ENCODE measurements at regions of chr6 and their contacts with region 1.

Region 1: DNA sequence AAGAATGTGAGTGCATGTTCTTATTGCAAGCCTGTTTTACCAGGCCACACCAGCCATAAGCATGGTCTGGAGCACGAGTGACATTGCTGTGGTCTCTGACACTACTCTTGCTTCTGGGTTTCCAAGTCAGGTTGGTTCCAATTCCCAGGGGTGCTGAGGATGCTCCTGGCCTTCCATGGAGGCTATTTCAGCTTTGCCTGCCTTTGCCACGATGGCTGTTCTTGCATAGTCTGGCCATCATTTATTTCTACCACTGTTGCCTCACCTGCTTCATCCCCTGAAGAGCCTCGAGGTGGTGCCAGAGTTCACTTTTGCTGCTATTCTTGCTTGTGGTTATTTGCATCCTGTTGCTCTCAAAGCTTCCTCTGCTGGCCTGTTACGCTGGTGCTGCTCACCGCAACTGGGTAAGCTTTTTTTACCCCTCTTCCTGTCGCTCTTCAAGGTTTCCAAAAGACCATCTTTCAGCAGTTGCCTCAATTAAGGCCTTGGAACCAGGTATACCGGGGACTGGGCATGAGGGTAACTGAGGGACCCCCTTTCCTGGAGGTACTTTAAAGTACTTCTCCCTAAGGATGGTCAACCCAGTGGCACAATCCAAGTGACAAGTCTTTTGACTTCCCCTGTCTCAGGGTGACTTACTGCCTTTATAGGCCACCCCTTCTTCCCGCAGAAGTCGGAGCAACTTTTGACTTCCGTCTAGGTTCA is 64.5 kb downstream of the AKAP7 start:
- DNase-seq: peak; percentile 37 to 92 (median 88)
- ATAC-seq: peak; percentile 99
- H3K4me3 ChIP-seq: peak overlapping the region; percentile 44
- H3K4me3 Mint-ChIP-seq: peak overlapping the region; percentile 69 to 87 (median 82)
- H3K27ac ChIP-seq: peak overlapping the region; percentile 79
- H3K27ac Mint-ChIP-seq: peak overlapping the region; percentile 91 to 99 (median 97)
- H3K4me1 ChIP-seq: peaks cover 45 to 57% of the 10 kb centered on the region in 2 donors
- H3K4me1 Mint-ChIP-seq: peaks cover 37 to 71% (median 61%) of the 10 kb centered on the region in 7 donors
- H3K27me3 ChIP-seq: no peaks in the 10 kb centered on the region
- H3K27me3 Mint-ChIP-seq: no peaks in the 10 kb centered on the region

Region 2: DNA sequence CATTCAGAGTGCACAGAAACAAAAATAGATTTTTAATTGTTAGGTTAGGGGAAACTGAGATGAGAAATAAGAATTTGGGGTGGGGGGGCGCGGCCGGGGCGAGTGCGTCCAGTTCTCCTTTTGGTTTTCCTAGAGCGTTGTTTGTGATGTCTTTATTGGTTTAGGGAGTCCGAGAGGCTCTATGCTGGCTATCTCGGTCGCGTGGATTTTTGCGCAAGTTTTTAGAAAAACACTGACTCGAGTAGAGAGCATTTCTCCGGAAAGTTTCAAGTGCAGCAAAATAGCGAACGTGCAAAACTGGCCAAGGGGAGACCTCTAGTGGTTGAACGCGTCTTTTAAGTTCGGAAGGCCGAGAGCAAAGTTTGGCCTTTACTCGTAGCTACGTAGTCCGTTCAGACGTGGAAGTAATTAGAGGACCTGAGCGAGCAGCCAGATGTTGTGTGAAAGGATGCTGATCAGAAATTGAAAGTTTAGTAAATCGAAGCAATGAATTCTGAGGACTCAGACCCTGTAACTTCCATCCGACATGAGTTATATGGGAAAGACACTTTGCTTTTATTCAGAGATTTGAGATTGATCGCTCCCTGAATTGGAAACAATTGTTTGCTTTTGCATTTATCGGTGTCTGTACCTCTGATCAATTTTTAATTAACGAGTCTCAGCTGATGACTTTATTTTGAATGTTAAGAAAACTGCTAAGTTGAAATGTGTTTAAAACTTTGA is 1178.7 kb before region 1 on chr6:
- CTCF ChIA-PET with region 1: no interaction called
- POLR2A ChIA-PET with region 1: no interaction called
- intact Hi-C with region 1: loop called in 1 of 2 experiments (anchors 5 kb)
- DNase-seq: peak; percentile 43 to 83 (median 78)
- ATAC-seq: peak; percentile 81
- H3K4me3 ChIP-seq: peak overlapping the region; percentile 62
- H3K4me3 Mint-ChIP-seq: peak overlapping the region; percentile 78 to 100 (median 98)
- H3K27ac ChIP-seq: peak overlapping the region; percentile 71
- H3K27ac Mint-ChIP-seq: peak overlapping the region; percentile 91 to 98 (median 96)
- H3K4me1 ChIP-seq: peaks cover 5 to 14% of the 10 kb centered on the region in 2 donors
- H3K4me1 Mint-ChIP-seq: peaks cover 21 to 56% (median 48%) of the 10 kb centered on the region in 7 donors
- H3K27me3 ChIP-seq: no peaks in the 10 kb centered on the region
- H3K27me3 Mint-ChIP-seq: peaks cover 0 to 19% (median 0%) of the 10 kb centered on the region in 5 donors

Region 3: GRCh38 chr6:131135244-131136020 is 64.3 kb before region 1 on chr6 and contains the start of gene AKAP7:
- CTCF ChIA-PET with region 1: interaction called, 3 read pairs
- POLR2A ChIA-PET with region 1: no interaction called
- intact Hi-C with region 1: loop called (anchors 1 kb)
- DNase-seq: peak; percentile 42 to 67 (median 61)
- ATAC-seq: peak; percentile 81
- H3K4me3 ChIP-seq: peak within 1 kb of the TSS; percentile 73
- H3K4me3 Mint-ChIP-seq: peak within 1 kb of the TSS; percentile 87 to 99 (median 94)
- H3K27ac ChIP-seq: peak within 1 kb of the TSS; percentile 75
- H3K27ac Mint-ChIP-seq: peak within 1 kb of the TSS; percentile 93 to 99 (median 96)
- H3K4me1 ChIP-seq: peaks cover 0 to 9% of the 10 kb centered on the region in 2 donors
- H3K4me1 Mint-ChIP-seq: peaks cover 18 to 50% (median 33%) of the 10 kb centered on the region in 7 donors
- H3K27me3 ChIP-seq: no peaks in the 10 kb centered on the region
- H3K27me3 Mint-ChIP-seq: peaks cover 0 to 21% (median 0%) of the 10 kb centered on the region in 5 donors
- total RNA-seq, gene AKAP7: 6.5 to 20.2 (median 12.4) TPM

Region 4: GRCh38 chr6:131250122-131250521 is 50.4 kb after region 1 on chr6:
- CTCF ChIA-PET with region 1: no interaction called
- POLR2A ChIA-PET with region 1: no interaction called
- intact Hi-C with region 1: loop called in 1 of 2 experiments (anchors 1 kb)
- DNase-seq: peak in 7 of 9 donors; percentile 9 to 44 (median 19)
- ATAC-seq: peak; percentile 86
- H3K4me3 ChIP-seq: peak overlapping the region; percentile 25
- H3K4me3 Mint-ChIP-seq: peak overlapping the region in 9 of 10 donors; percentile 70 to 88 (median 79)
- H3K27ac ChIP-seq: peak overlapping the region; percentile 27
- H3K27ac Mint-ChIP-seq: peak overlapping the region in 8 of 9 donors; percentile 5 to 84 (median 46)
- H3K4me1 ChIP-seq: peaks cover 5 to 19% of the 10 kb centered on the region in 2 donors
- H3K4me1 Mint-ChIP-seq: peaks cover 18 to 71% (median 50%) of the 10 kb centered on the region in 7 donors
- H3K27me3 ChIP-seq: no peaks in the 10 kb centered on the region
- H3K27me3 Mint-ChIP-seq: no peaks in the 10 kb centered on the region

Region 5: GRCh38 chr6:131353876-131354275 is 154.2 kb after region 1 on chr6:
- CTCF ChIA-PET with region 1: no interaction called
- POLR2A ChIA-PET with region 1: no interaction called
- intact Hi-C with region 1: loop called in 1 of 2 experiments (anchors 5 kb)
- DNase-seq: no peak
- ATAC-seq: no peak
- H3K4me3 ChIP-seq: no peak overlapping the region
- H3K4me3 Mint-ChIP-seq: no peak overlapping the region
- H3K27ac ChIP-seq: no peak overlapping the region
- H3K27ac Mint-ChIP-seq: peak overlapping the region in 2 of 9 donors; percentile 3 to 24
- H3K4me1 ChIP-seq: peaks cover 0 to 7% of the 10 kb centered on the region in 2 donors
- H3K4me1 Mint-ChIP-seq: peaks cover 8 to 41% (median 19%) of the 10 kb centered on the region in 7 donors
- H3K27me3 ChIP-seq: no peaks in the 10 kb centered on the region
- H3K27me3 Mint-ChIP-seq: no peaks in the 10 kb centered on the region

Region 6: DNA sequence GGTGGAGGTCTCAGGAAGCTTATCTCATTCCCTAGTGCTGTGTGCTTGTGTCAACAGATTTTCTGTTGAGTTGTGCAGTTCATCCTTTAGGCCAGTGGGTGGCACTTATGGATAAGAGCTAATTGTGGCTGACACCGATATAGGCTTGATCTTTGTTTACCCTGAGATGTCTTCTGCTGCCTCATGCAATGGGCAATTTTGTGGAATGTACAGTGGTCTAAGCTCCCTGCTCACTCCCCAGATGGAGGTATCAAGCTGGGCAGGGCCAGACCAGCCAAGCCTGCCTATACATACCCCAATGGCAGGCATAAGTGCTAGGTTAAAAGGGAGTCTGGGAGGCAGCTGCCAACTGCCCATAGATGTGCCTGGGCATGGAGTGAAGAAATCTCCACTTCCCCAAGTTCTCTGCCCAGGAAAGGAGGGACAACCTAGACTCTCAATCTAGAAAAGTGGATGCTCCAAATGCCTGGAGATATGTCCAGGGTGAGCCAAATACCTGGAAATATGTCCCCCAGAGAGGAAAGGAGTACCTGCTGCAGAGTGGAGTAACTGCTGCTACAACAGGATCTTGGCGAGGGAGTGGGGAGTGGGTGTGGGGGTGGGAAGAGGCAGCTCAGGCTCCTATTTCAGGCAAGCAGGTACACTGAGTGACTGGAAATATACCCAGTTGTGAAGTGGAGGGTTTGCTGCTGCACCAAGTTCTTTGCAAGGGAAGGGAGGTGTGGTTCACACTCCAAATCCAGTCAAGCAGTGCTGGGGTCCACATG is 320.1 kb after region 1 on chr6:
- CTCF ChIA-PET with region 1: interaction called, 17 read pairs
- POLR2A ChIA-PET with region 1: interaction called, 7 read pairs
- intact Hi-C with region 1: loop called in 1 of 2 experiments (anchors 1 kb)
- DNase-seq: peak in 7 of 9 donors; percentile 38 to 64 (median 55)
- ATAC-seq: peak; percentile 92
- H3K4me3 ChIP-seq: no peak overlapping the region
- H3K4me3 Mint-ChIP-seq: no peak overlapping the region
- H3K27ac ChIP-seq: no peak overlapping the region
- H3K27ac Mint-ChIP-seq: peak overlapping the region in 6 of 9 donors; percentile 29 to 69 (median 40)
- H3K4me1 ChIP-seq: peaks cover 0 to 9% of the 10 kb centered on the region in 2 donors
- H3K4me1 Mint-ChIP-seq: peaks cover 8 to 25% (median 20%) of the 10 kb centered on the region in 7 donors
- H3K27me3 ChIP-seq: no peaks in the 10 kb centered on the region
- H3K27me3 Mint-ChIP-seq: peaks cover 0 to 8% (median 0%) of the 10 kb centered on the region in 5 donors

Region 7: DNA sequence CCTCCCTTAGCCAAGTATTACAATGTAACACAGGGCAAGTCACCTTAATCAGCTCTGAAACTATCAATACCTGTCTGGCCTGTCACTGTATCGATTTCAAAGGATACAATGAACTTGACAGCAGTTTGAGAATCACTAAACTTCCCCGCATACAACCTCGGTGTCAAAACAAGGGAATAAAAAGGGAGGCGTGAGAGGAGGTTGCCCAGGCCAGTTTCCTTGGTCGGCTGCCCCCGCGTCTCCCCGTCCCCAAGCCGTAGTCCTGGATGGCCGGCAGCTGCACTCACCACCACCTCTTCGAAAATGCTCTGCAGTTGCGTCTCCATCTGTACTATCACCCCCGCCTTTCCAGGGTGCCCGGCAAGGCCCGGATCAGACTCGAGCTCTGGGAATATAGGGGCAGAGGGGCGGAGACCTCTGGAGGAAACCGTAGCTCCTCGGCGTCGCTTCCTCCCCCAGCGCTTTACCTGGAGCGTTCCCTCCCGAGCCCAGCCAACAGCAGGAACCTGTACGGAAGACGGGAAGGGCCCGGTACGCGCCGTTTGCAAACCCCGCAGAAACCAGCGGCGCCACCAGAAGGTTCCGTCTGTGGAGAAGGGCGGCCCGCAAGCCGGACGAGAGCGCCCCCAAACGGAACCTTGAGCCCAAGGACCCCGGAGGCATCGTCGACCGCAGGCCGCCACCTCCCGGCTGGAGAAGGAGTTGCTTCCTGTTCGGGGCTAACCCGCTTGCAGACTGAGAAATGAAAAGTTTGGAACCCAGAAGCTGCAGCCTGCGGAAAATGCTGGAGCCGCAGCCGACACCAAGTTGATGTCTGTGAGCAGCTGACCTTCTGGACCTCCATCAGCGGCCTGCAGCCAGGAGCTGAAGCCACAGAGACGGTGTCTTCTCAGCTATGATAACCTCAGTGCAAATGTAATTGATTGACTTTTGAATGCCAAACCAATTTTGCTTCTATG is 428.3 kb after region 1 on chr6 and contains the start of gene MED23:
- CTCF ChIA-PET with region 1: interaction called, 5 read pairs
- POLR2A ChIA-PET with region 1: interaction called, 4 read pairs
- intact Hi-C with region 1: loop called (anchors 1 kb)
- DNase-seq: peak; percentile 85 to 98 (median 94)
- ATAC-seq: peak; percentile 99
- H3K4me3 ChIP-seq: peak within 1 kb of the TSS; percentile 92
- H3K4me3 Mint-ChIP-seq: peak within 1 kb of the TSS; percentile 95 to 100 (median 98)
- H3K27ac ChIP-seq: peak within 1 kb of the TSS; percentile 75
- H3K27ac Mint-ChIP-seq: peak within 1 kb of the TSS; percentile 93 to 96 (median 95)
- H3K4me1 ChIP-seq: peaks cover 16 to 18% of the 10 kb centered on the region in 2 donors
- H3K4me1 Mint-ChIP-seq: peaks cover 20 to 51% (median 46%) of the 10 kb centered on the region in 7 donors
- H3K27me3 ChIP-seq: no peaks in the 10 kb centered on the region
- H3K27me3 Mint-ChIP-seq: peaks cover 0 to 2% (median 0%) of the 10 kb centered on the region in 5 donors
- total RNA-seq, gene MED23: 35.7 to 59.1 (median 55.4) TPM